ENCODE measurements at regions of chr17 and their contacts with region 1.

Region 1: DNA sequence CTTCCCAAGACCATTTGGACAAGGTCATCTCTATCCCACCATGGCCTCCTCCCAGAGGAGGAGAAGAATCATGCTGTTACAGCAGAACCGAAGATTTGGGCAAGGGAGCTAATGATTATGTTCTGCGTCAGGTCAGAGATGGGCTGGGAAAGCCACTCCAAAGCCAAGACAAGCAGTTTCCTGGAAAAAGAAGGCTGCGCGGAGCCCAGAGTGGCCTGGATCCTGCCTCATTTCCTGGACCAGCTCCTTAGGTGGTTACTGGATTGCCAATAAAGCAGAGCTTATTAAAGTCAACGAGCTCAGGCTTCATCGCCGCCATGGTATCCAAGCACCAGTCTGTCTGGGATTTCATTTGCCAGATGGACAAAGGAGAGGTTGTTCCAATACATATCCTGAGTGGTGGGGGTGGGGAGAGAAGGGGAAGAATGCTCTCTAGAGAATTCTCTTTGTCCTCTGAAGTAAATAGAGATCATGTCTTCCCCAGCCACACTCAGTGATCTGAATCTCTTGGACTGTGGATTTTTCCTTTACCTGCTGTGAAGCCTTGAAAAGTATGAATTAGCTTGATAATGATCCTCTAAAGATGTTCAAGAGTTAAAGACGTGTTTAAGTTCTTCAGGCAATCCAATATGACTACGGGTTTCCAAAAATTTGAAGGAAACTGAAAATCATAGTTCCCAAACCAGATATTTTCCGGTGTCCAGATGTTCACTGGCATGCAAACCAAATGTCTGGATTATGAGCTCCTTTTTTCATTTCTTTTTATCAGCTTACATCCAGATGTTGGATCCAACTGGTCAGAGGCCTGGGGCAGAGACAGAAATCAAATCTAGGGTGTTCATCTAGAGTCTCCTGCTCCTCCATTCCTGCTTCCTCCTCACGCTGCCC is 17.7 kb downstream of the PRAC1 start:
- DNase-seq: no peak
- ATAC-seq: no peak
- H3K4me3 ChIP-seq: no peak overlapping the region
- H3K27ac ChIP-seq: no peak overlapping the region
- H3K4me1 ChIP-seq: no peaks in the 10 kb centered on the region
- H3K27me3 ChIP-seq: peaks cover 66% of the 10 kb centered on the region
- CTCF ChIP-seq: no peak
- POLR2A ChIP-seq: no peak
- RAD21 ChIP-seq: no peak

Region 2: DNA sequence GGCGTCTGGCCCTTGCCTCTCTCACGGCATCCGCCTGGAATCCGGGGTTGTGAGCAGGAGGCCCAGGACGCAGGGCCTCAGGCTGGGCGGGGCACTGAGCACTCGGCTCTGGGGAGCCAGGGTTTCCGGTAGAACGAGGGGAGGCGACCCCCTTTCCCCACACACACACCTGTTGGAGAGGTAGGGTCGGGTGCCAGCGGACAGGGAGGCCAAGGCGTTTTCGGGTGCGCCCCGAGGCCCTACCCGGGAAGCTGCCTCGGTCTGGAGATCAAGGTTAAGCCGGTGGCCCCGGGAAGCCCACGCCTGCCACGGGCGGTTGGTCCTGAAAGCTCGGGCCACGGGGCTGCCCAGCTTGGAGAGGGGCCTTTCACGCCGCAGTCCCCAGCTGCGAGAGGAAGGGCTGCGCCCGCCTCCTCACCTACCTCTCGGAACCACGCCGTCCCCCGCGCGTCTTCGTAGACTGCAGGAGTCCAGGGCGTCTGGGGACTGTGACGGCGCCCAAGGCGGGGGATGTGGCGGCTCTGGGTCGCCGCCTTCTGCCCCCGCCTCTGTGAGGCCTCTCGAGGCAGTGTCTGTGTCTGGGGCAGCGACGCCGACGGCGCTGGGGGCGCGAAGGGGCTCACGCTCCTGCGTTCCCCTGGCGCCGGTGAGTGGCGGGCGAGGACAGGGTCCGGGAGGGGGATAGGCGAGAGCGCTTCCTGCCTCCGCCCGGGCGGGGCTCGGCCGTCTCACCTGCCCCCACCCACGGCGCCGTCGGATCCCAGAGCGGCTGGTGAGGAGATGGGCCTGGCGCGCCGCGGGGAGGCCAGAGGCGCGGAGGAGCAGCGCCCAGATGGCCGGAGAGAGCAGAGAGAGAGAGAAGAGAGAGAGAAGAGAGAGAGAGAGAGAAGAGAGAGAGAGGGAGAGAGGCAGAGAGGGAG is 58.2 kb before region 1 on chr17:
- CTCF ChIA-PET with region 1: no interaction called
- POLR2A ChIA-PET with region 1: no interaction called
- dilution Hi-C with region 1: no loop called
- in situ Hi-C with region 1: loop called (anchors 10 kb)
- intact Hi-C with region 1: no loop called
- DNase-seq: no peak
- ATAC-seq: no peak
- H3K4me3 ChIP-seq: no peak overlapping the region
- H3K27ac ChIP-seq: no peak overlapping the region
- H3K4me1 ChIP-seq: no peaks in the 10 kb centered on the region
- H3K27me3 ChIP-seq: peaks cover 72% of the 10 kb centered on the region
- CTCF ChIP-seq: no peak
- POLR2A ChIP-seq: no peak
- RAD21 ChIP-seq: no peak